ENCODE measurements at regions of chr1 and their contacts with region 1.

Region 1: GRCh38 chr1:67214420-67215174 is 48.3 kb downstream of the IL23R start:
- DNase-seq: peak in 7 of 9 experiments; percentile 11 to 66 (median 45)
- ATAC-seq: peak; percentile 55
- H3K4me3 ChIP-seq: no peak overlapping the region
- H3K4me3 Mint-ChIP-seq: no peak overlapping the region
- H3K27ac ChIP-seq: no peak overlapping the region
- H3K27ac Mint-ChIP-seq: no peak overlapping the region
- H3K4me1 ChIP-seq: peaks cover 10% of the 10 kb centered on the region
- H3K4me1 Mint-ChIP-seq: peaks cover 17% of the 10 kb centered on the region
- H3K27me3 ChIP-seq: no peaks in the 10 kb centered on the region
- H3K27me3 Mint-ChIP-seq: no peaks in the 10 kb centered on the region
- CTCF ChIP-seq: peak; percentile 65

Region 2: DNA sequence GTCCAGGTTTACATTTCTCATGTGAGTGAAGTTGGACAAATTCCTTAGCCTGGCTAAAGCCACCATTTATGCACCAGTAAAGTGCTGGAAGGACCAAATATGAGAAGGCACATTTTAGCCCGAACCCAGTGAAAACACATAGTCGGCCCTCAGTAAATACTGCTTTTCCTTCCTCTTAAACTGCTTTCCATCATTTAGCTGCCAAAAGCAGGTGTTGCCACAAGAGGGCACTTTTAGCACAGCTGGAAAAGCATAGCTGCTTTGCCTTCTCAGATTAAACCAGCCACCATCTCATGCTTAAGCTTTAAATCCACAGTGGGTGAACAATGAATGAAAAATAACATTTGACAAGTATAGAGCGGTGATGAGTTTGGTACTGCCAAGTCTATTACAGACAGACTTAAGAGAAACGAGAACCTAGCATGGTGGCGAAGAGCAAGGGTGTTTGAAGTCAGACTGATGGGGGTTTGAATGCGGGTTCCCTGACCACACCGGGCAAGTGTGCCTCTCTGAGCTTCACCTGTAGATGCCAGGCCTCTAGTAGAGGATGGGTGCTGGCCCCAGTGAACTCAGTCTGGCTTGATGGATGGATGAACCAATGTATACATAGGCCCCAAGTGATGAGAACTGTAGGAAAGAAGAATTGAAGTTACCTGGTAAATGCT is 218.4 kb before region 1 on chr1:
- CTCF ChIA-PET with region 1: interaction called, 48 read pairs
- POLR2A ChIA-PET with region 1: interaction called, 3 read pairs
- intact Hi-C with region 1: loop called (anchors 2 to 10 kb)
- DNase-seq: peak; percentile 29 to 74 (median 57)
- ATAC-seq: peak; percentile 86
- H3K4me3 ChIP-seq: no peak overlapping the region
- H3K4me3 Mint-ChIP-seq: no peak overlapping the region
- H3K27ac ChIP-seq: no peak overlapping the region
- H3K27ac Mint-ChIP-seq: peak overlapping the region; percentile 32
- H3K4me1 ChIP-seq: peaks cover 5% of the 10 kb centered on the region
- H3K4me1 Mint-ChIP-seq: peaks cover 21% of the 10 kb centered on the region
- H3K27me3 ChIP-seq: no peaks in the 10 kb centered on the region
- H3K27me3 Mint-ChIP-seq: no peaks in the 10 kb centered on the region
- CTCF ChIP-seq: peak; percentile 70

Region 3: DNA sequence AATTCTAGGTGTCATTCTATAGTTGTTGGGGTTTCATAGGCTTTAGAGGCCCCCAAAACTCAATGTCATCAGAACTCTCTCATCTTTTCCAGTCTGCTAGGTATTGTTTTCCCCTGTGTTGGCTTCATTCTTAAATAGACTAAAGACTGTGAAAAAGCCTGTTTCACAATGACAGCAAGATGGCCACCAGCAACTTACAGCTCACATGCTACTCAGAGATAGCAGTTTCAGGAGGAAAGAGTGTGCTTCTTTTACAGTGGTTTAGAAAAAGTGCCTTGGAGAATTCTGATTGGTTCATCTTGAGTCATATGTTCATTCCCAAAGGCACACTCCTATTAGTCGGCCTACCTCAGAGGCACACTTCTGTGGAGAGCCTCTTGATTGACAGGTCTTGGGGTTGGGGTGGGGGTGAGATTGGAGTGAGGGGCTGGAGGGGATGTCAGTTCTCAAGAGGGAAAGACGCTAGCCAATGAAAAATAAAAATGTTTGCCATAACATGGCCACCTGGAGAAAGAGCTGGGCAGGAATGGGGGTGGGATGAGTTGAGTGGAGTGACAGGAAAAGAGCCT is 39.8 kb before region 1 on chr1:
- CTCF ChIA-PET with region 1: interaction called, 43 read pairs
- POLR2A ChIA-PET with region 1: interaction called, 5 read pairs
- intact Hi-C with region 1: loop called (anchors 2 to 5 kb)
- DNase-seq: no peak
- ATAC-seq: no peak
- H3K4me3 ChIP-seq: no peak overlapping the region
- H3K4me3 Mint-ChIP-seq: no peak overlapping the region
- H3K27ac ChIP-seq: no peak overlapping the region
- H3K27ac Mint-ChIP-seq: no peak overlapping the region
- H3K4me1 ChIP-seq: peaks cover 35% of the 10 kb centered on the region
- H3K4me1 Mint-ChIP-seq: peaks cover 42% of the 10 kb centered on the region
- H3K27me3 ChIP-seq: no peaks in the 10 kb centered on the region
- H3K27me3 Mint-ChIP-seq: no peaks in the 10 kb centered on the region
- CTCF ChIP-seq: no peak

Region 4: DNA sequence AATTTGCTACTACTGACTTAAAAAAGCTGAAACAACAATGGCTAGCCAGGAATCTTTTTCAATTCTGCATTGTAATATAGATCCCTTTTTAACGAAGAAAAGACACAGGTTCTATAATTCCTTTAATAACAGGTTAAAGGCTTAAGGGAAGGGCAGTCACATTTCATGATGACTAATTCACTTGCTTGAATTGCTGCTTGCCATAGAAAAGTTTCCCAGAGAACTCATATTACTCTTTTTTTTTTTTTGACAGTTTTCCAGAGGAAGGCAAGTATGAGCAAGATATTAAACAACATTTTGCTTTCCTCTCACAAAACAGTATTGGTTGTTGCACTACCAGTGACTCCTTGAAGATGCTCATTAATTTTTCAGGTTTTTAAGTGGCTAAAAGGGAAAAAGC is 12.6 kb after region 1 on chr1:
- CTCF ChIA-PET with region 1: interaction called, 22 read pairs
- POLR2A ChIA-PET with region 1: interaction called, 3 read pairs
- intact Hi-C with region 1: no loop called
- DNase-seq: no peak
- ATAC-seq: no peak
- H3K4me3 ChIP-seq: no peak overlapping the region
- H3K4me3 Mint-ChIP-seq: no peak overlapping the region
- H3K27ac ChIP-seq: no peak overlapping the region
- H3K27ac Mint-ChIP-seq: no peak overlapping the region
- H3K4me1 ChIP-seq: no peaks in the 10 kb centered on the region
- H3K4me1 Mint-ChIP-seq: peaks cover 2% of the 10 kb centered on the region
- H3K27me3 ChIP-seq: no peaks in the 10 kb centered on the region
- H3K27me3 Mint-ChIP-seq: peaks cover 7% of the 10 kb centered on the region
- CTCF ChIP-seq: no peak

Measured in CD8-positive, alpha-beta T cell (primary cell).